ENCODE measurements at regions of chr3 and their contacts with region 1.

Region 1: DNA sequence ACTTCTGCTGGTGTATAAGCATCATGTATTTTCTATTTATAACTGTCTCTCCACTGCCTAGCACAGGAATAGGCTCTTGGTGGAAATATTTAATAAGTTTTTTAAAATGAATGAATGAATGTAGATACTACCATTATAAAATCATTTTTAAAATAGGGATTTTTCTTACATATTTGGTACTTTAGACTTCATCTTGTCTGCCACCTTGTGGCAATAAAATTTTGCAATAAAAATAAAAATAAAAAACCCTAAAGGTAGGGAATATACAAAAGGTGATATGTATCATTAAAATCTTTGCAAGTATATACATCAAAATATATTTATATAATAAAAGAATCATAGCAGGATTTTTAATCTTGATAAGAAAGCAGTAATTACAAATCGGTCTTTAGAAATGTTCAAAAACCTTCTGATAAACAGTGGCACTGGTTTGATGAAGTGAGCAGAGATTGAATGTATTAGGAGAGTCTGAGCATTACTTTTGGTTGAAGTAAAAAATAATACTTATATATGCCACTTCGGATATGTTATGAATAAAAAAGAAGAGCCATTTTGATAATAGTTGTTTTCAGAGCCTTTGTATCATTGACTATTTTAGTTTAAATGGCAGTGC is 95.2 kb downstream of the SPATA16 start:
- DNase-seq: no peak
- H3K4me3 Mint-ChIP-seq: no peak overlapping the region
- H3K27ac Mint-ChIP-seq: no peak overlapping the region
- H3K4me1 Mint-ChIP-seq: no peaks in the 10 kb centered on the region
- H3K27me3 Mint-ChIP-seq: no peaks in the 10 kb centered on the region

Region 2: DNA sequence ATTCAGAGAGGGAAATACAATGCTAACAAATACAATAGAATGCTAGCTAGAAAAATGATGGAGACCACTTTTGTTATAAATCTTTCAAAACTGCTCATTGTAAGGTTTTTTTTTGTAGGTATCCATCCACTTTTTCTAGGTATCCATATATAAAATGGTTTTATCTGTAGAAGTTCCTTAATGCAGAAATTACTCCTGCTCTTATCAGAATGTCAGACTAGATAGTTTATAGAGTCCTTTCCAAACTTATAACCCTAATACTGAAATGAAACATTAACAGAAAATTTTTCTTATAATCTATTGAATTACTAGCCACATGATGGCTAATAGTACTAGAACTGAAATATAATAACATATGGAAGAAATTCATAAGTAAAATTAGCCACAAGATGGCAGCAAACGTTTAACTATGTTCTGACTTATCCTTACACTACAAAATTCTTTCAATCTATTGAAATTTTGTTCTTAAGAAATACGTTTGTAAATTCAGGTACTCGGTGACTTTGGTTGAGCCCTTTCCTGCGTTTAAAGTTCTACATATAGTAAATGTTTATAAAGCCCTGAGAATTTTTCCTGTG is 236.8 kb before region 1 on chr3:
- intact Hi-C with region 1: loop called (anchors 10 kb)
- DNase-seq: no peak
- H3K4me3 Mint-ChIP-seq: no peak overlapping the region
- H3K27ac Mint-ChIP-seq: no peak overlapping the region
- H3K4me1 Mint-ChIP-seq: peaks cover 1% of the 10 kb centered on the region
- H3K27me3 Mint-ChIP-seq: no peaks in the 10 kb centered on the region

Region 3: GRCh38 chr3:173090492-173090891 is 44.6 kb after region 1 on chr3:
- intact Hi-C with region 1: no loop called
- DNase-seq: no peak
- H3K4me3 Mint-ChIP-seq: no peak overlapping the region
- H3K27ac Mint-ChIP-seq: no peak overlapping the region
- H3K4me1 Mint-ChIP-seq: no peaks in the 10 kb centered on the region
- H3K27me3 Mint-ChIP-seq: no peaks in the 10 kb centered on the region